Left lung (tissue), 14 donors: ENCODE measurements at regions of chr12 and their contacts with region 1.

Region 1: GRCh38 chr12:32761716-32762115 is 6.0 kb upstream of the YARS2 start:
- DNase-seq: no peak
- ATAC-seq: no peak
- H3K4me3 ChIP-seq: no peak overlapping the region
- H3K27ac ChIP-seq: no peak overlapping the region
- H3K4me1 ChIP-seq: no peaks in the 10 kb centered on the region
- H3K27me3 ChIP-seq: peaks cover 0 to 28% of the 10 kb centered on the region in 2 donors
- CTCF ChIP-seq: no peak

Region 2: GRCh38 chr12:32618115-32618514 is 143.6 kb before region 1 on chr12:
- intact Hi-C with region 1: no loop called
- DNase-seq: no peak
- ATAC-seq: no peak
- H3K4me3 ChIP-seq: no peak overlapping the region
- H3K27ac ChIP-seq: no peak overlapping the region
- H3K4me1 ChIP-seq: no peaks in the 10 kb centered on the region
- H3K27me3 ChIP-seq: no peaks in the 10 kb centered on the region
- CTCF ChIP-seq: no peak

Region 3: GRCh38 chr12:32920280-32921089 is 158.8 kb after region 1 on chr12:
- intact Hi-C with region 1: loop called in 1 of 2 experiments (anchors 10 kb)
- DNase-seq: no peak
- ATAC-seq: no peak
- H3K4me3 ChIP-seq: no peak overlapping the region
- H3K27ac ChIP-seq: no peak overlapping the region
- H3K4me1 ChIP-seq: peaks cover 0 to 4% of the 10 kb centered on the region in 2 donors
- H3K27me3 ChIP-seq: no peaks in the 10 kb centered on the region
- CTCF ChIP-seq: no peak